ENCODE measurements at regions of chr16 and their contacts with region 1.

Region 1: DNA sequence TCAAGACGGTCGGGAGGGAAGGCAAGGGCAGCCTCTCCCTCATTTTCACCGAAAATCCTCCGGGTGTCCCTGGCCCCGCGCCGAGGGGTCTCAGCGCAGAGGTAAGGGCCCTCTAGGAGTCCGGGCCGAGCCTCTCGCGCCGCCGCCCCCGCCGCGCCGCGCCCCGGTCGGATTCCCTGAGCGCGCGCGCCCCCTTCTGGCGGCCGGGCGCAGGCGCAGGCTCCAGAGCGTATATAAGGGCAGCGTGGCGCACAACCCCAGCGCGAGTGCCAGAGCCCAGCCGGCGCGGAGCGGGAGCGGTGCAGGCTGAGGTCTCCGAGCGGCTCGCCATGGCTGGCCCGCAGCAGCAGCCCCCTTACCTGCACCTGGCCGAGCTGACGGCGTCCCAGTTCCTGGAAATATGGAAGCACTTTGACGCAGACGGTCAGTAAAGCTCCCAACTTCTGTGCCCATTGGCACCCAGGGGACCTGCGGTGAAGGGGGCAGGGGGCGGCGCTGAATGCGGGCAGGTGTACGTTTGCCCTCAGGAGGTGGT is at the start of gene CALB2:
- DNase-seq: no peak
- H3K4me3 ChIP-seq: peak within 1 kb of the TSS; percentile 44
- CTCF ChIP-seq: peak; percentile 82

Region 2: DNA sequence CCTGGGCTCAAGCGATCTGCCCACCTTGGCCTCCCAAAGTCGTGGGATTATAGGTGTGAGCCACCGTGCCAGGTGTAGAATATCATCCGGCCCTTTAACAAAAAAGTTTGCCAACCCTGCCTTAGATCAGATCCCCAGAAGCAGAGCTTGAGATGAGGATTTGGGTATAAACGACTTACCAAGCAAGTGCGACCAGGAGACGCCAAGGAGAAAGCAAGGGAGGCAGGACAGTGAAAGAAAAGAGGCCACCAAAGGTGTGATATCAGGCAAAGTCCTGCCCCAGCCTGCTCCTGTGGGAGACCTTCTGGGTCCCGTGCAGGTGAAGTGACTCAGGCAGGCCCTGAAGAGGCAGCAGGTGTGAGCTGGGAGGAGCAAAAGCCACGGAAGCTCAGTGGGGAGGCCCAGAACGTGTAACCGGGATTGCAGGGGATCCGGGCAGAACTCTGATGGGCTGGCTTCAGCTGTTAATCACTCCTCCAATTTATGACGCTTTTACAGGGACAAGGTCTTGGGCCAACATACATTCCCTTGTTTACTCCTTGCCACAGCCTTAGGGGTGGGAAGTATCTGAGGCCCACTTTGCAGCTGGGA is 14.1 kb before region 1 on chr16:
- CTCF ChIA-PET with region 1: interaction called, 12 read pairs
- POLR2A ChIA-PET with region 1: no interaction called
- DNase-seq: no peak
- H3K4me3 ChIP-seq: no peak overlapping the region
- CTCF ChIP-seq: no peak

Region 3: GRCh38 chr16:71373073-71373472 is 14.5 kb after region 1 on chr16:
- CTCF ChIA-PET with region 1: interaction called, 28 read pairs
- POLR2A ChIA-PET with region 1: no interaction called
- DNase-seq: peak; percentile 5
- H3K4me3 ChIP-seq: no peak overlapping the region
- CTCF ChIP-seq: no peak

Measured in AG04449 (cell line).